PC-9 (cell line): ENCODE measurements at regions of chr14 and their contacts with region 1.

Region 1: GRCh38 chr14:102096214-102097114 is 9.6 kb upstream of the HSP90AA1 start:
- DNase-seq: peak; percentile 70 to 88
- H3K4me3 ChIP-seq: peak overlapping the region; percentile 11; the same call in 1 of the 2 replicates
- H3K27ac ChIP-seq: peak overlapping the region; percentile 61
- H3K4me1 ChIP-seq: peaks cover 43% of the 10 kb centered on the region
- H3K27me3 ChIP-seq: no peaks in the 10 kb centered on the region
- CTCF ChIP-seq: peak; percentile 98

Region 2: GRCh38 chr14:101947906-101948665 is 148.4 kb before region 1 on chr14:
- CTCF ChIA-PET with region 1: no interaction called
- POLR2A ChIA-PET with region 1: no interaction called
- intact Hi-C with region 1: loop called (anchors 5 kb)
- DNase-seq: peak; percentile 100
- H3K4me3 ChIP-seq: peak overlapping the region; percentile 83
- H3K27ac ChIP-seq: peak overlapping the region; percentile 93
- H3K4me1 ChIP-seq: peaks cover 20% of the 10 kb centered on the region
- H3K27me3 ChIP-seq: no peaks in the 10 kb centered on the region
- CTCF ChIP-seq: no peak

Region 3: GRCh38 chr14:102028421-102029172 is 67.9 kb before region 1 on chr14:
- CTCF ChIA-PET with region 1: interaction called, 6 read pairs
- POLR2A ChIA-PET with region 1: interaction called, 3 read pairs
- intact Hi-C with region 1: loop called (anchors 2 kb)
- DNase-seq: peak; percentile 91 to 100
- H3K4me3 ChIP-seq: peak overlapping the region; percentile 24; the same call in 1 of the 2 replicates
- H3K27ac ChIP-seq: peak overlapping the region; percentile 92
- H3K4me1 ChIP-seq: peaks cover 46% of the 10 kb centered on the region
- H3K27me3 ChIP-seq: no peaks in the 10 kb centered on the region
- CTCF ChIP-seq: no peak; the same call in 1 of the 2 replicates

Region 4: DNA sequence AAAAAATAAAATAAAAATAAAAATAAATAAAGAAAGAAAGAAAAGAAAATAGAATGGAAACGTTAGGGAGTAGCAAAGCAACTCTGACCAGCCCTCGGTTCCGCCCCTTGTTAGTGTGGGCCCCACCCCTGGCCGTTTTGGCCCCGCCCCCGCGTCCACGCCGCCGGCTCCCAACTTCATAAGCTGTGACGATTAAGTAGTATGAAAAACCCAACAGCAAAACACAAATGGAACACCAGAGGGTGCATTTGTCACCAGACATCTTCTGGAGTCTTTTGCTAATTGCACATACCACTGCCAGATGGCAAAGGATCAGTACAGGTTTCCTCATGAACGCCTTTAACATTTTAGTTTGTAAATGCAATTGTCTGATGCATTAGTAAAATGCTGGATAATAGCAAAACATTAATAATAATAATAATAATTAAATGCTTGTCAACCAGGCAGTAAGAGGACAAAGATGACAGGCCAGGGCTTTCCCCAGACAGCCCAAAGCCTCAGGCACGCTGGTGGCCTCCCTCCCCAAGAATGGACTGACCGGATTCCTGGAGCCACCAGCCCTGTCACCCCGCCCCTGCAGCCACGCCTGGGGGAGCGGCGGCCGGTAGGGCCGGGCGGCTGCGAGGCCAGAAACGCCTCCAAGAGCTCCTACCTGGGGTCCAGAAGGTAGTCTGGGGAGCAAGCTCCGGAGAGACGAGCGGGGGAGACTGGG is 33.2 kb before region 1 on chr14:
- CTCF ChIA-PET with region 1: interaction called, 35 read pairs
- POLR2A ChIA-PET with region 1: interaction called, 3 read pairs
- intact Hi-C with region 1: loop called (anchors 1 kb)
- DNase-seq: peak; percentile 95 to 97
- H3K4me3 ChIP-seq: peak overlapping the region; percentile 48
- H3K27ac ChIP-seq: peak overlapping the region; percentile 57
- H3K4me1 ChIP-seq: peaks cover 23% of the 10 kb centered on the region
- H3K27me3 ChIP-seq: no peaks in the 10 kb centered on the region
- CTCF ChIP-seq: peak; percentile 88

Region 5: GRCh38 chr14:102139248-102140026 is 43.0 kb after region 1 on chr14 and contains the start of gene WDR20:
- CTCF ChIA-PET with region 1: interaction called, 4 read pairs
- POLR2A ChIA-PET with region 1: interaction called, 7 read pairs
- intact Hi-C with region 1: loop called (anchors 1 kb)
- DNase-seq: peak; percentile 98 to 100
- H3K4me3 ChIP-seq: peak within 1 kb of the TSS; percentile 75
- H3K27ac ChIP-seq: peak within 1 kb of the TSS; percentile 44
- H3K4me1 ChIP-seq: peaks cover 31% of the 10 kb centered on the region
- H3K27me3 ChIP-seq: no peaks in the 10 kb centered on the region
- CTCF ChIP-seq: peak; percentile 19; the same call in 1 of the 2 replicates
- total RNA-seq, gene WDR20: 62.2 and 93.5 TPM in 2 replicates

Region 6: GRCh38 chr14:102279688-102280348 is 183.4 kb after region 1 on chr14:
- CTCF ChIA-PET with region 1: no interaction called
- POLR2A ChIA-PET with region 1: no interaction called
- intact Hi-C with region 1: loop called (anchors 1 kb)
- DNase-seq: peak; percentile 94 to 100
- H3K4me3 ChIP-seq: peak overlapping the region; percentile 26; the same call in 1 of the 2 replicates
- H3K27ac ChIP-seq: peak overlapping the region; percentile 95
- H3K4me1 ChIP-seq: peaks cover 82% of the 10 kb centered on the region
- H3K27me3 ChIP-seq: no peaks in the 10 kb centered on the region
- CTCF ChIP-seq: no peak